Activated naive CD4-positive, alpha-beta T cell treated with anti-CD3 and anti-CD28 coated beads, Interleukin-2, amount 10 ng/mL, durations not matched to agents 7 days and 5 days (primary cell): ENCODE measurements at regions of chr14 and their contacts with region 1.

Region 1: DNA sequence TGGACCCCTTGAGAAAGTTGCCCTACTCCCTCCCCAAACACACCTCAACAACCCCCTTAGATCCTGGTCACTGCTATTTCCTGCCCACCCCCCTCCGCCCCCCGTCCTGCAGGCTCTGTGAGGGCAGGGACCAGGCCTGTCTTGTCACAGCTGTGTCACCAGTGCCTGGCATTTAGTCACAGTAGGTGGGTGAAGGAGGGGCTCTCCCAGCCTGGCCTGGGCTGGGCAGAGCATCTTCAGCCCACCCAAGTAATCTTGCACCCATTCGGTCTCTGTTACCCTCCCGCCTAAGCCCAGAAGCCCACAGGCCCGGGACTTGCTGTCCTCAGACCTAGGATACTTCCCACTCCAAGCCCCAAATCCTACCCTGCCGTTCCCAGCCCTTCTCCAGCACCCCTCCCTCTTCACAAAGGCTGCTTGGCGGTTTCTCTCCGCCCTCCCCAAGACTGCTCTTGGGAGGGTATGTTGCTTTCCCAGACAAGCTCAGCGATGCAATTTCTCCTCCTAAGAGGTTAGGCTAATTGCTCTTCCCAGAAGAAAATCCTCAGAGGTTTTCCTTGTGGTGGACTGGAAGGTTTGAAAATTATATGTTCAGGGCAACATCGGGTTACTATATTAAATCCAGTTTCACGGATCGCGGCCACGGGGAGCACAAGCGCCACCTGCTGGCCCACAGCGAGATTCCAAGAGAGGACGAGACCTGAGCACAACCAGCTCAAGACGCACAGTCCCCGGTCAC is 50.8 kb upstream of the ZFP36L1 start:
- DNase-seq: peak; percentile 83
- H3K4me3 Mint-ChIP-seq: no peak overlapping the region
- H3K27ac Mint-ChIP-seq: no peak overlapping the region
- H3K4me1 Mint-ChIP-seq: peaks cover 18% of the 10 kb centered on the region
- H3K27me3 Mint-ChIP-seq: peaks cover 16% of the 10 kb centered on the region

Region 2: DNA sequence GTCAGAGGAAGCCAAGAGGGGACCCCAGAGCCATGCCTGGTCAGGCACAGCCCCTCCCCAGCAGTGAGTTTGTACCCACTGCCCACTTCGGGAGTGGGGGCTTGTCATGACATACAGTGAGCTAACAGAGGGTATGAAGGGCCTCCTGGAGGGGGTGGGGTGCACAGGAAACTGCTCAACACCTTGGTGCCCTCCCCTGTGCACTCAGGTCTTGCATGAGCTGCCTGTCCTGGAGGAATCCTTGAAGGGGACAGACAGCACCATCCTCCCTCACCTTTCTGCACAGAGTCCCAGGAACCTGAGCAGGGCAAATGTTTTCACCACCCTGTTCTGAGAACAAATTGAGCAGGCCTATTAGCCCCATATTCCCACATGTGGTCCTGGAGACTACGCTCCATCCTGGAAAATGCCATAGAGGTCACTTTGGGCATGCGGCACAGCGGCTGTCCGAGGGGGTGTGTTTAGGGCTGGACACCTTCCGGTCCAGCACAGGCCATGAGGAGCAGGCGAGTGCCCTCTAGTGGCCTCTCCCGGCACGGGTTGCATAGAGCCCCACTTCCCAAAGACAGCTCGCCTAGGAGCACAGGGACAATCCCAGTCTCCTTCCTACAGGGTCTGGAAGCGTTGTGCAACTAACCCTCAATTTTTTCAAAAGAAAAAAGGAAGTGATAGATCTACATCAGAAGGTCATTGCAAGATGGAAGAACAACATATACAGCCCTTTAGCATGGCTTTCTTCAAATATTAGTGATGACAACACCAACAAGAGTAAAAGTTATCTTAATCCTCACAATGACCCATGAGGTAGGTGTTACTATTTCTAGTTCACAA is 18.9 kb before region 1 on chr14:
- CTCF ChIA-PET with region 1: interaction called, 48 read pairs
- DNase-seq: peak; percentile 48
- H3K4me3 Mint-ChIP-seq: no peak overlapping the region
- H3K27ac Mint-ChIP-seq: no peak overlapping the region
- H3K4me1 Mint-ChIP-seq: peaks cover 28% of the 10 kb centered on the region
- H3K27me3 Mint-ChIP-seq: peaks cover 6% of the 10 kb centered on the region